ENCODE measurements at regions of chr5 and their contacts with region 1.

Region 1: DNA sequence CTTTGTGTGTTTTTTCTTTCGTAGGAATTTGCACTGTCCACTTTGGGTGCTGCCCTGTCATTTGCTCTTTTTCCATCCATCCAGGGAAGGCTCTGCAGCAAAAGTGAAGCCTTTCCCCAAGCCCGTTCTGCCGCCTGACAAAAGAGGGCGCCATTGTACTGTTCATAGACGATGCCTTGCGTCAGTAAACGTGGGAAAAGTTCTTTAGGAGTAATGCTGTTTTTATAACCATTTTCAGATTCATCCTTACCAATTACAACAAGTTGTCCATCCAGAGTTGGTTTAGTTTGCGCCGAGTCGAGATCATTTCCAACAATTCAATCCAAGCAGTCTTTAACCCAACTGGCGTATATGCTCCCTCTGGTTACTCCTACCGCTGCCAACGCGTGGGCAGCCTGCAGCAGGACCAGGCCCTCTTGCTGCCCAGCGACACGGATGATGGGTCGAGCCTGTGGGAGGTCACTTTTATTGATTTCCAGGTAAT is 34.3 kb upstream of the RPS23 start:
- DNase-seq: peak; percentile 83
- ATAC-seq: peak; percentile 85
- H3K4me3 ChIP-seq: no peak overlapping the region
- H3K27ac ChIP-seq: no peak overlapping the region
- H3K4me1 ChIP-seq: peaks cover 6% of the 10 kb centered on the region; the same call in 1 of the 2 replicates
- H3K27me3 ChIP-seq: no peaks in the 10 kb centered on the region
- CTCF ChIP-seq: peak; percentile 98
- POLR2A ChIP-seq: peak; percentile 26; the same call in 1 of the 2 replicates
- RAD21 ChIP-seq: peak; percentile 98

Region 2: GRCh38 chr5:82793808-82794419 is 481.5 kb after region 1 on chr5:
- CTCF ChIA-PET with region 1: no interaction called
- POLR2A ChIA-PET with region 1: no interaction called
- dilution Hi-C with region 1: no loop called
- in situ Hi-C with region 1: no loop called
- intact Hi-C with region 1: loop called (anchors 5 kb)
- DNase-seq: peak; percentile 20
- ATAC-seq: no peak
- H3K4me3 ChIP-seq: no peak overlapping the region
- H3K27ac ChIP-seq: no peak overlapping the region
- H3K4me1 ChIP-seq: no peaks in the 10 kb centered on the region
- H3K27me3 ChIP-seq: no peaks in the 10 kb centered on the region
- CTCF ChIP-seq: peak; percentile 54
- POLR2A ChIP-seq: no peak
- RAD21 ChIP-seq: peak; percentile 51

Region 3: DNA sequence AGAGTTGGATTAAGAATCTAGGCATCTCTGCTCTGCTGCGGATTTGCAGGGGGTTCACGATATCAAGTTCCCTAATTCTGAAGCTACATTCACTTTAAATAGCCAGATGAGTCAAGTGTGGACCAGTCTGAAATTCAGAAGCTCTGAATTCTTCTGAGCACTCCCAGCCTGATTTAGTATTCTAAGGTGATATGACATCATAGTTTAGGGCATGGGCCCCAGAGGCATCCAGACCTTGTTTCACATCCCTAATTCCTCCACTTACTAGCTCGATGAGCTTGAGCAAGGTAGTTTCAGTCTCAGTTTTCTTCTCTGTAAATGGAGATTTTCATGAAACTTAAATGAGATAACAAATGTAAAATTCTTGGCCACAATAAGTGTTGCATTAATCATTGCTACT is 699.6 kb after region 1 on chr5:
- CTCF ChIA-PET with region 1: no interaction called
- POLR2A ChIA-PET with region 1: no interaction called
- dilution Hi-C with region 1: no loop called
- in situ Hi-C with region 1: no loop called
- intact Hi-C with region 1: no loop called
- DNase-seq: peak; percentile 2
- ATAC-seq: no peak
- H3K4me3 ChIP-seq: no peak overlapping the region
- H3K27ac ChIP-seq: no peak overlapping the region
- H3K4me1 ChIP-seq: peaks cover 2% of the 10 kb centered on the region; the same call in 1 of the 2 replicates
- H3K27me3 ChIP-seq: no peaks in the 10 kb centered on the region
- CTCF ChIP-seq: no peak
- POLR2A ChIP-seq: no peak
- RAD21 ChIP-seq: no peak

Region 4: GRCh38 chr5:83564069-83564749 is 1251.8 kb after region 1 on chr5:
- CTCF ChIA-PET with region 1: no interaction called
- POLR2A ChIA-PET with region 1: no interaction called
- dilution Hi-C with region 1: no loop called
- in situ Hi-C with region 1: no loop called
- intact Hi-C with region 1: loop called (anchors 5 kb)
- DNase-seq: peak; percentile 63
- ATAC-seq: peak; percentile 56; the same call in 1 of the 2 replicates
- H3K4me3 ChIP-seq: no peak overlapping the region
- H3K27ac ChIP-seq: no peak overlapping the region
- H3K4me1 ChIP-seq: peaks cover 9% of the 10 kb centered on the region
- H3K27me3 ChIP-seq: no peaks in the 10 kb centered on the region
- CTCF ChIP-seq: peak; percentile 70
- POLR2A ChIP-seq: no peak
- RAD21 ChIP-seq: peak; percentile 75